GM10248 (cell line): ENCODE measurements at regions of chr2 and their contacts with region 1.

Region 1: DNA sequence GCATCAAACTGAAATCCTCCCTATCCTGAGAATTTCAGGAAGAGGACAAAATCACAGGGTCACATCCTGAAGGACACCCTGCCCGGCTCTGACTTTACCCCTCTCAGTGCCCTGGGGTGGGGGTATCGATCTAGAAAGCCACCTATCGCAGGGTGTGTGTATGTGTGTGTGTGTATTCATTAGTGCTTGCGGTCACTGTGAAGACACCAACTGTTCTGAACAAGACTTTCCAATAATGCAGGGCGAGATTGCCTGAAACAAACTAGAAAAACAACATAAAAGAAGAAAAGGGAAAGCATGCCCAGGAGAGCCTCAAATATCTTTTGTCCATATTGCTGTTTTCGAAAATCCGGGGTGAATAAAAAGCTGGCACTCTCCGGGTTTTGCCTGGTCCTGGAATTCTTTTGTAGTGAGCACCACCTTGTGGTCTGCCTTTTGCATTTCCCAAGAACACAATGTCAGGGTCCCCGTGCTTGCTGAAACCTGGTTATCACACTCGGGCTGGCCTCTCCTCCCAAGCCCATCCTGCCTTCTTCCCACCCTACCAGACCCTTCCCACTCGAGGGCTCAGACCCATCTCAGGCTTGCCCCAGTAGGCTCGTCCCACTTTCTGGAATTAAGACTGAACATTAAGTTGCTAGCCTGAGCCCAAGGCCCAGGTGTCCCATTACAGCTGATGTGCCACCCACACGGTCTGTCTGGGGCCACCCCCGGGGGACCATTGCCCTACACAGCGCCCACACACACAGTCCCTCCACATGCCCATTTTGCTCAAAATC is 25.0 kb upstream of the COPS8 start:
- DNase-seq: peak; percentile 62
- CTCF ChIP-seq: peak; percentile 69

Region 2: DNA sequence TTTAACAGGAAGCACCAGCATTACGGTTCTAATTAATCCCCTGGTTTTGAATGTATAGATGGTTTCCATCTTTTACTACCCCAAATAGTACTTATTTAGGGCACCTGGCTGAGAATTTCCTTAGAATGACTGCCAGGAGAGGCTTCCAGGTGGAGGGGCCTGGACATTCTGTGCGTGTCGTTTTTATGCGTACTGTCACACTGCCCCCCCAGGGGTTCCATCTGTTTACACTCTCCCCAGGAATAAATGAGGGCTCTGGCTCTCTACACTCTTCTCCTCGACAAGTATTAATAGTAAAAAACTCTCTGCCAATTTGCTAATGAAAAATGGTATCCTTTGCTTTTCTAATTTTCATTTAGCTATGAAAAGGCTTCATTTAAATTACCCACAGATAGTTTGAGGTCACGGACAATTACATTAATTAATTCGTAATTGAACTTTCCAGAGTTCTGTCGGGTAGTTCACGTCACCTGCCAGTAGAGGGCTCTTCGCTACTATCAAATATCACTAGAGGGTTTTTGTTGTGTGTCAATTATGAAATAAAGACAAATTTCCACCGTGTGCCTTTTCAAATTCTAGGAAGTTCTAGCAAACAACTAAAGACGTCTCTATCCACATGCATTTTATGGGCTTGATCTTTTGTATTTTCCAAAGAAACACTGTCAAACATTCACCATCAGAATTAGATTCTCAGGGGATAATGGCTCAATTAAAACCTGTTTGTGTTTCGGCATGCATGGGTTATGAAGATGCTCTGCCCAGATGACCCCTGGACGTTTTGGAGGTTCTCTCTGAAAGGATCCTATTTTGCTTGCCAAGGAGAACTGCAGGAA is 707.7 kb before region 1 on chr2:
- CTCF ChIA-PET with region 1: interaction called, 18 read pairs
- POLR2A ChIA-PET with region 1: no interaction called
- DNase-seq: peak; percentile 53
- CTCF ChIP-seq: peak; percentile 73

Region 3: DNA sequence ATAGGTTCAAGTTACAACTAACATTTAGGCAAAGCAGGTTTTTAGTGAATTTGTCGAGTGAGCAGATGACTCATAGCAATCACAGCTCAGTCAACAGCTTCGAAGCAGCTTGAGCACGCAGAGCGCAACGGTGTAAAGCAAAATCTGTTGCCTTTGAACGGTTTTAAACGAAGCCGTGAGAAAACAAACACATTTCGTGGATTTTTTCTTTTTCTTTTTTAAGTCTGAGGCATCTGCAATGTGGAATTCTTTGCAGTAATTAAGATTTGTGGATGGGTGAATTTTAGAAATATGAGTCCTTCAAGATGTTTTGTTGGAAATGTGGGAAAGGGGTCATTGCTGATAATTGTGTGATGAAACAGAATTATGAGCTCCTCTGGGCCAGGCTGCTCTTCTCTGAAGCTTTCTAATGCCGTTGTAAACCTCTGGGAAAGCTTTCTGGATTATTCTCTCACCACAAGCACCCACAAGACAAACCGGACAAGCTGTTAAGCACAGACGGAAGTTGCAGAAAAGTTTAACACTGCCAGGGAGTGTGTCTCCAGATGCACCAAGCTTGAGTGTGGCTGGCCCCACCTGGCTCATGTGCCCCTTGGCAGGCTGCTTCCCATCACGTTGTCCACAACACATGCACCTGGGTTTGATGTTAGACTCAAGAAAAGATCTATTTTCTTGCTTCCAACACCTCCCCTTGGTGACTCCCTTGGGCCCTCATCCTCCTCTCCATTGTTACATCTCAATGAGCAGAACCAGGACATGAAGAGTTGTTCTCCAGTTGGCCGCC is 266.4 kb before region 1 on chr2:
- CTCF ChIA-PET with region 1: no interaction called
- POLR2A ChIA-PET with region 1: no interaction called
- DNase-seq: no peak
- CTCF ChIP-seq: no peak

Region 4: GRCh38 chr2:236988690-236989624 is 71.8 kb before region 1 on chr2:
- CTCF ChIA-PET with region 1: no interaction called
- POLR2A ChIA-PET with region 1: no interaction called
- DNase-seq: no peak
- CTCF ChIP-seq: no peak

Region 5: DNA sequence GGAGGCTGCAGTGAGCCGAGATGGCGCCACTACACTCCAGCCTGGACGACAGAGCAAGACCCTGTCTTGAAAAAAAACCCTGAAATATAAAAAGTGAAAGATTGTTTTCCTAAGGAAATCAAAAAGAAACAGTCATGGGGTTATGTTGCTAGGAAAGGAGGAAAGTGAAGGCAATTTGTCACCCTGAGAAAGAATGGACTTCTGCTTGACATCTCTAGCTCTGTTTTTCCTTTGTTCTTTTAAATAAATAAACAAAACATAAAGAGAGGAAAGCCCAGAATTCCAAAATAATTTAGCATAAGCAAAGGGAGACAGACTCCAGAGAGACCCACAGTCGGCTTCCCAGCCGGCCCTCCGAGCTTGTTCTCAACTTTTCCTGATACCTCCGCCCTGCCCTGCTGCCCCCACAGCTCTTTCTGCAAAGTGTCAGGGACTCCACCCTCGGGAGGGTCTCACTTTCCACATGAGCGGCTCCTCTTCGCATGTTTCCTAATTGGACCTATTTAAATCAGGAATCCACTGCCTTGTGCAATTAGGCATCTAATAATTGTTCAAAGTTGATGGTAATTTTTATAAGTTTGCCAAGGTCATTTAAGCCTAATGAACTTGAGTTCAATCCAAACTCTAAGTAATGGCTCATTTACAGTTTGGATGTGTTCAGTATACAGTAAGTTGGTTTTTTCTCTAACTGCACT is 24.8 kb before region 1 on chr2:
- CTCF ChIA-PET with region 1: no interaction called
- POLR2A ChIA-PET with region 1: no interaction called
- DNase-seq: no peak
- CTCF ChIP-seq: no peak

Region 6: DNA sequence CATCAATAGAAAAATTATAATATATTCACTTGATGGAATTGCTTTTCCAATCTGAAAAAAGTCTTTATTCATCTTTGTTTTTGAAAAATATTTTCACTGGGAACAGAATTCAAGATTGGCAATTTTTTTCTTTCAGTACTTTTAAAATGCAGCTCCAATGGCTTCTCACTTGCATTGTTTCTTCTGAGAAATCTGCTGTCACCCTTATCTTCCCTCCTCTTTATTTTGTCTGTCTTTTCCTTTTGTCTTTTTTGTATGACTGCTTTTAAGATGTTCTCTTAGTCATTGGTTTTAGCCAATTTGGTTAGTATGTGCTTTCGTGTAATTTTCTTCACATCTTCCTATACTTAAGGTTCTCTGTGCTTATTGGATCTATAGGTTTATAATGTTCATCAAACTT is 12.1 kb before region 1 on chr2:
- CTCF ChIA-PET with region 1: no interaction called
- POLR2A ChIA-PET with region 1: no interaction called
- DNase-seq: no peak
- CTCF ChIP-seq: no peak